ENCODE measurements at regions of chr1 and their contacts with region 1.

Region 1: DNA sequence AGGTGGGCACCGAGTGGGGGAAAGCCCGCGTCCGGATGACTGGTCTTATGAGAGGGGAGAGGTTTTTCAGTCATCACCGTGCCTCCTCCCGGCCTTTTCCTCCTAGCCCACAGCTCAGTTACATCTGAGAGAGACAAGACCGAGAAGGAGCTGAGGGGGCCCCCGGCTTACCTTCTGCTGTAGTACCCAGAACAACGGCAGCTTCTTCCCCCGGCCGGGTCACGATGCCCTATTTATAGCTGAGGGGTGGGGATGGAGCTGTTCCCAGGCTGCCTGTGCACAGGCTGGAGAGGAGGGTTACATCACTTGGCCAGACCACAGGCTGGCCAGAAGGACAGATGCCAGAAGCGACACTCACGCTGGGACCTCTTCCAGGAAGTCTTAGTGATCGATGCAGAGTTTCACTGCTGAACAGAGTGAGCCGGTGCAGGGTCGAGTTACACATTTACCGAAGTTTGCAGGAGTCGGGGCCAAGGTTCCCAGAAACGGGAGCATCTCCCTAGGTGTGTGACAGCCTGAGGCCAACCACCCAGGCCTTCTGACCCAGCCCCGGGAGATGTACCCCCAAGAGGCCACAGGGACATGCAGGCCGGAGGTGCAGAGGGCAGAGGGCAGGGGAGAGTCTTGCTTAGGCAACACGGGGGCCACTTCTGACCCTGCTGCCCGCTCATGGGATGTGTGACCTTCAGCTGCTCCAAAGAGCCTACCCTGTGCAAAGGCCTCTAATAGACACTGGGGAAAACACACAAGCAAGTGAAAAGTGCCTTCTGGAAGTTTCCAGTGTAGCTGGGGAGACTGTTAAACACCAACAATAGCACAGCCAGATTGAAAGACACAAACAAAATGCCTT is at the start of gene AGT:
- DNase-seq: peak; percentile 95
- ATAC-seq: peak; percentile 85
- H3K4me3 ChIP-seq: peak within 1 kb of the TSS; percentile 83 to 92 (median 90)
- H3K27ac ChIP-seq: peak within 1 kb of the TSS; percentile 93
- H3K4me1 ChIP-seq: peaks cover 61% of the 10 kb centered on the region
- H3K27me3 ChIP-seq: peaks cover 0 to 2% of the 10 kb centered on the region in 2 experiments; a peak in 1 of 5 replicates
- CTCF ChIP-seq: peak; percentile 37
- EP300 ChIP-seq: peak; percentile 76 to 95; a peak in 3 of 4 replicates
- POLR2A ChIP-seq: peak in 1 of 2 experiments; percentile 95; a peak in 2 of 4 replicates
- RAD21 ChIP-seq: peak; percentile 28; the same call in 1 of the 2 replicates
- total RNA-seq, gene AGT: 378 and 892 TPM in 2 replicates

Region 2: DNA sequence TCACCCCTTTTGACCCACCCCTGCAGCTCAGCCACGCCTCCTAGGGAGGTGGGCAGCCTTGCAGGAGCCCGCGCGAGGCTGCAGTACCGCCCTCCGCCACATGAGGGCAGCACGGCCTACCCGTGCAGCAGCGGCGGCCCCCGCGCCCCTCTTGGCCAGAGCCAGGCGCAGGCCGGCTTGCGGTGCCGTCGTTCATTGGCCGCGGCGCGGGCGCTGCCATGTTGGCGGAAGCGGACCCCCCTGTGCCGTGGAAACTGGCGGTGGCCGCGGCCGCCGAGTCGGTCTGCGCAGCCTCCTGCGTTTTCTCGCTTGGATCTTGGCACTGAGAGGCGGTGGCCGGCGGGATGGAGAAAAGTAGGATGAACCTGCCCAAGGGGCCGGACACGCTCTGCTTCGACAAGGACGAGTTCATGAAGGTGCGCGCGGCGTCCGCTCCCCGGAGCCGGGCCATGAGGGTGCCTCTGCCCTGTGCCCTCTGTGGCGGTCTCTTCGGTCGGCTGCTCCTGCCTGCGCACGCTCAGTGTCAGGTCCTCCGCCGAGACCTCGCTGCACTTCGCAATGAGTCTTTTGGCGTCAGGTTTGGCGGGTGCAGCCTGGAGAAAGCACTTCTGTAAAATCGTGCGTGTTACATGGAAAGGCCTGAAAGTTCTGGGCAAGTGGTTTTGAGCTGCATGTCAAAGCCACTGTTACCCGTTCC is 71.7 kb before region 1 on chr1 and contains the start of gene COG2:
- CTCF ChIA-PET with region 1: no interaction called
- POLR2A ChIA-PET with region 1: interaction called, 84 read pairs
- in situ Hi-C with region 1: no loop called
- intact Hi-C with region 1: no loop called
- DNase-seq: peak; percentile 77
- ATAC-seq: peak; percentile 95
- H3K4me3 ChIP-seq: peak within 1 kb of the TSS; percentile 85 to 96 (median 88)
- H3K27ac ChIP-seq: peak within 1 kb of the TSS; percentile 86
- H3K4me1 ChIP-seq: peaks cover 75% of the 10 kb centered on the region
- H3K27me3 ChIP-seq: no peaks in the 10 kb centered on the region; a peak in 1 of 5 replicates
- CTCF ChIP-seq: peak; percentile 96
- EP300 ChIP-seq: no peak; a peak in 1 of 4 replicates
- POLR2A ChIP-seq: peak; percentile 67 to 88
- RAD21 ChIP-seq: peak; percentile 93
- total RNA-seq, gene COG2: 36.3 and 51.3 TPM in 2 replicates

Region 3: DNA sequence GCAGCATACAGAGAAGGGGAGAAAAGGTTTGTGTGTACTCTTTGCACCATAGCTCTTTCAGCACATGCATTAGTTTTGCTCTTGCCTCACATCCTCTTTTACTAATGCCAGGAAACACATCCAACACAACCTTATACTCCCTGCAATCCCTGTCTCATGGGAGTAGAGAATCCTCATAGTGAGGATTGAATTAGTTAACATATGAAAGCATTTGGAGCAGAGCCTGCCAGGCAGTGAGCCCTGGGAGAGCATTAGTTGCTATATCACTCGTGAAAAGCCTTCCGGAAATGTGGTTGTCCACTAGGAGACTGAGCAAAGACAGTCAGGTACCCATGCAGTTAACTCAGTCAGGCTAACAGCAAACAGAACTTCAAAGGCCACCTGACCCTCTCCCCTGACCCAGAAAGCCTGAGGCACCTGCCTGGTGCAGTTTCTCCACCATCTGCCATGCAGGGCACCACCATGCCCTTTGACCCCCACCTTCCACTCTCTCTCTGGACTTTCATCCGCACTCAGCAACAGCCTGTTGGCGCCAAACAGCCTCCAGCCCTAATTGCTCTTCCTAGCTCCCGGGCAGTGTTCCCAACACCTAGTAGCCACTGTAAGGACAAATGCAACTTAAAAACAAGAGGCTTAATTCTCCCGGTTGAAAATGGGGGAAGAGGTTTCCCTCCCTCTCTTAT is 14.7 kb after region 1 on chr1:
- CTCF ChIA-PET with region 1: no interaction called
- POLR2A ChIA-PET with region 1: interaction called, 110 read pairs
- in situ Hi-C with region 1: no loop called
- intact Hi-C with region 1: loop called (anchors 2 kb)
- DNase-seq: peak; percentile 95
- ATAC-seq: peak; percentile 94
- H3K4me3 ChIP-seq: peak overlapping the region; percentile 3 to 63 (median 36); a peak in 4 of 6 replicates
- H3K27ac ChIP-seq: peak overlapping the region; percentile 94
- H3K4me1 ChIP-seq: peaks cover 94% of the 10 kb centered on the region
- H3K27me3 ChIP-seq: no peaks in the 10 kb centered on the region
- CTCF ChIP-seq: peak; percentile 38
- EP300 ChIP-seq: peak; percentile 89 to 96
- POLR2A ChIP-seq: peak in 1 of 2 experiments; percentile 60; a peak in 2 of 4 replicates
- RAD21 ChIP-seq: peak; percentile 54

Region 4: DNA sequence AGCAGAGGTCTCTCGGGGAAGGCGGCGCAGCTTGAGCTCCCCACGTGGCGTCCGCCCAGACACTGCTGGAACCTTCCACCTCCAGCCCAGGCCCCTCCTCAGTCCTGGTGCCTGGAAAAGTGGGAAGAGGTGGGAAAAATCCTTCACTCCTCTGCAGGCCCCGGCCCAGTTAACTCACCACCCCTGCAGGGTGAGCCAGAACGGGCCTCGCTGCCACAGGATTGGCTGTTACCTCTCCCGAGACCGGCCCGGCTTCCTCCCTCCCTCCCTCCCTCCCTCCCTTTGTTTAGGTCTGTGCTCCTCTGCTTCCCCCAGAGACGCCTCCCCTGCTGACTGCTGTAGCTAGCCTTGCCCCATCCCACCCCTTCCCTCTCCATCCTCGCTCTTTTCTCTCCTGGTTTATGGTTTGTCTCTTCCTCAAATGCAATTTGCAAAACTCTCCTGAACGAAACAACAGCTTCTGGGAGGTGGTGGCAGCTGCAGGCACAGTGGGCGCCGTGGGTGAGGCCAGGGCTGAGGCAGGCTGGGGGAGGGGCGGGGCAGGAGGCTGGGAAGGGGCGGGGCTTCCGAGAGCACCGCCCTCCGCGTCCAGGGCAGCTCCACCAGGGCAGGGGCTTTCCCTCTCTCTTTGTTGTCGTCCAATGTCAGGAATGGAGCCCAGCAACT is 39.6 kb after region 1 on chr1:
- CTCF ChIA-PET with region 1: no interaction called
- POLR2A ChIA-PET with region 1: interaction called, 46 read pairs
- in situ Hi-C with region 1: no loop called
- intact Hi-C with region 1: loop called (anchors 5 kb)
- DNase-seq: peak; percentile 30
- ATAC-seq: peak; percentile 57
- H3K4me3 ChIP-seq: peak overlapping the region; percentile 35 to 68 (median 57)
- H3K27ac ChIP-seq: peak overlapping the region; percentile 40
- H3K4me1 ChIP-seq: peaks cover 88% of the 10 kb centered on the region
- H3K27me3 ChIP-seq: no peaks in the 10 kb centered on the region
- CTCF ChIP-seq: no peak
- EP300 ChIP-seq: no peak
- POLR2A ChIP-seq: no peak
- RAD21 ChIP-seq: no peak

Region 5: DNA sequence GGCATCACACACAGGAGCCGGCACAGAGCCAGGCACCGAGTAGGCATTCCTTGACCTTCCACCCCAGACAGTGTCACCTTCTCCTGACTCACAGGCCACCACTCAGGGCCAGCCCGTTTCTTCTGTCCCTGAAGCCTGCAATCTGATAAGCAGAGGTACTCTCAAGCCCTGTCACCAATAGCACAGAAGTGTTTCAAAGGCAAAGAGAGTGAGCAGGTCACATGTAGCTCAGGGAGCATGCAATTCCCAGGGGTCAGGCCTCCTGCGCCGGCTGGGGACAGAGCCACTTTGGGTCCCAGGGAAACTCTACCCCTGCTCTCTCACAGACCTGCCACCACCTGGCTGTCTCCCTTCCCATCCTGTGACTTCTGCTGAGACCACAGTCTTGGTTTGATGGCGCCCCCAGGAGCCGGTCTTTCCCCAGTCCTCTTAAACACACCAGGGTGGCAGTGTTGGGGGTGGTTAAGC is 46.3 kb after region 1 on chr1:
- CTCF ChIA-PET with region 1: no interaction called
- POLR2A ChIA-PET with region 1: interaction called, 13 read pairs
- in situ Hi-C with region 1: no loop called
- intact Hi-C with region 1: loop called (anchors 2 kb)
- DNase-seq: peak; percentile 58
- ATAC-seq: peak; percentile 90
- H3K4me3 ChIP-seq: peak overlapping the region in 1 of 3 experiments; percentile 5; a peak in 1 of 6 replicates
- H3K27ac ChIP-seq: no peak overlapping the region
- H3K4me1 ChIP-seq: peaks cover 67% of the 10 kb centered on the region
- H3K27me3 ChIP-seq: no peaks in the 10 kb centered on the region
- CTCF ChIP-seq: peak; percentile 84
- EP300 ChIP-seq: no peak
- POLR2A ChIP-seq: no peak
- RAD21 ChIP-seq: peak; percentile 57

Region 6: GRCh38 chr1:230772457-230773395 is 58.6 kb after region 1 on chr1:
- CTCF ChIA-PET with region 1: interaction called, 6 read pairs
- POLR2A ChIA-PET with region 1: interaction called, 33 read pairs
- in situ Hi-C with region 1: no loop called
- intact Hi-C with region 1: loop called (anchors 1 kb)
- DNase-seq: peak; percentile 56
- ATAC-seq: peak; percentile 75
- H3K4me3 ChIP-seq: no peak overlapping the region; a peak in 1 of 6 replicates
- H3K27ac ChIP-seq: no peak overlapping the region
- H3K4me1 ChIP-seq: peaks cover 34% of the 10 kb centered on the region
- H3K27me3 ChIP-seq: peaks cover 1 to 7% of the 10 kb centered on the region in 2 experiments; a peak in 3 of 5 replicates
- CTCF ChIP-seq: peak; percentile 94
- EP300 ChIP-seq: no peak
- POLR2A ChIP-seq: no peak
- RAD21 ChIP-seq: peak; percentile 89

Region 7: DNA sequence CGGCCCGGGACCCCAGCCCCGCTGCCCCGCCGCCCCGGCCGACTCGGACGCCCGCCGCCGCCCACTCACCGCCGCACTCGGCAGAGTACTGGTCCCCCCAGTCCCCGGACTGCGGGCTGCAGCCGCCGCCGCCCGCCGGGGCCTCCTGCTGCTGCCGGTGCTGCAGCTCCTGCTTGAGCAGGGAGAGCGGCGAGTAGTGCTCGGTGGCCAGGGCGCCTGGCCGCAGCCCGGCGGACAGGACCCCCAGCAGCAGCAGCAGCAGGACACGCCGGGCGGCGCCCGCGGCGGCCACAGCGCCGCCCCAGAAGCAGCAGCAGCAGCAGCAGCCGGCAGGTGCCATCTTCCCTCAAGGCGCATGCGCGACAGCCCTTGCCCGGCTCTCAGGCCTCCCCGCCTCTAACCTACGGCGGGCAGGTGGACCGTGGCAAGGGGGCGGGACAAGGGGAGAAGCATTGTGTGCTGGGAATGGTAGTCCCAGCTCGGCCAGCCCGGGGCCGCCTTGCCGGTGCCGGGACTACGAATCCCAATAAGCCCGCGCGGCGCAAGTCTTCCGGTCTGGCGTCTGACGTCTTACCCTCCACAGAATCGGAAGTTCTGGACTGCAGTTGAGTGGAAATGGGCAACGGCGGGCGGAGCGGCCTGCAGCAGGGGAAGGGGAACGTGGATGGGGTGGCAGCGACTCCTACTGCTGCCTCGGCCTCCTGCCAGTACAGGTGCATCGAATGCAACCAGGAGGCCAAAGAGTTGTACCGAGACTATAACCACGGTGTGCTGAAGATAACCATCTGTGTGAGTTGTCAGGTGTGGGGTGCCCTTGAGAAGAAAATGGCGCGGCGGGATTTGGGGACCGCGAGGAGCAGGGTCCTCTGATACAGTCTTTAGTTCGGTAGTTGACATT is 264.6 kb after region 1 on chr1 and contains the starts of genes ARV1 and TTC13:
- CTCF ChIA-PET with region 1: no interaction called
- POLR2A ChIA-PET with region 1: no interaction called
- in situ Hi-C with region 1: no loop called
- intact Hi-C with region 1: loop called (anchors 10 kb)
- DNase-seq: peak; percentile 98
- ATAC-seq: peak; percentile 98
- H3K4me3 ChIP-seq: peak within 1 kb of the TSS; percentile 87 to 94 (median 89)
- H3K27ac ChIP-seq: peak within 1 kb of the TSS; percentile 64
- H3K4me1 ChIP-seq: peaks cover 21% of the 10 kb centered on the region
- H3K27me3 ChIP-seq: no peaks in the 10 kb centered on the region; a peak in 1 of 5 replicates
- CTCF ChIP-seq: peak; percentile 85
- EP300 ChIP-seq: no peak
- POLR2A ChIP-seq: peak; percentile 65 to 75; a peak in 3 of 4 replicates
- RAD21 ChIP-seq: peak; percentile 86
- total RNA-seq, gene ARV1: 8.9 and 15.2 TPM in 2 replicates
- total RNA-seq, gene TTC13: 8.1 and 15.9 TPM in 2 replicates